HCT116 (cell line): ENCODE measurements at regions of chr10 and their contacts with region 1.

Region 1: GRCh38 chr10:52215745-52216361 is 98.2 kb upstream of the DKK1 start:
- DNase-seq: peak; percentile 60
- ATAC-seq: peak; percentile 69
- H3K4me3 ChIP-seq: no peak overlapping the region
- H3K27ac ChIP-seq: no peak overlapping the region
- H3K4me1 ChIP-seq: no peaks in the 10 kb centered on the region; a peak in 1 of 4 replicates
- H3K27me3 ChIP-seq: no peaks in the 10 kb centered on the region
- CTCF ChIP-seq: peak; percentile 51 to 80 (median 64); a peak in 5 of 6 replicates
- POLR2A ChIP-seq: no peak
- RAD21 ChIP-seq: peak; percentile 81

Region 2: DNA sequence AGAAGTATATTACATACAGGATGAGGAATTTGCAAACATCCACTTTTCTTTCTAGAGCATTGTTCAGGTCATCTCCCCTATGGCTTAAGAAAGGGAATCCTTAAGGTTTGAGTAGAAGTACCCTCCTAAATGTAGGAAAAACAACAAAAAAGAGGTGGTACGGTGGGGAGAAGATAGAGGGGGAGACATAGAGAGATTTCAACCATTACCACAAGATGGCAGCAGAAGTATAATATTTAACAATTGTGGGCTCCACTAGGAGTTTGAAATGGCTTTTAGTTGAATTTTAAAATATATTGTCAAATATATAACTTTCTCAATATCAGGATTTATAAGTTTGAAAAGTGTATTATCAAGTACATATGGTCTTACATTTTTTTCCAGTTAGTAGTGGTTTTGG is 1214.3 kb before region 1 on chr10:
- CTCF ChIA-PET with region 1: no interaction called
- POLR2A ChIA-PET with region 1: no interaction called
- RAD21 ChIA-PET with region 1: no interaction called
- intact Hi-C with region 1: loop called (anchors 1 kb)
- DNase-seq: no peak
- ATAC-seq: peak; percentile 72
- H3K4me3 ChIP-seq: no peak overlapping the region
- H3K27ac ChIP-seq: no peak overlapping the region
- H3K4me1 ChIP-seq: no peaks in the 10 kb centered on the region
- H3K27me3 ChIP-seq: peaks cover 7% of the 10 kb centered on the region
- CTCF ChIP-seq: peak; percentile 37 to 67 (median 48); a peak in 5 of 6 replicates
- POLR2A ChIP-seq: no peak
- RAD21 ChIP-seq: peak; percentile 53

Region 3: GRCh38 chr10:51063659-51064535 is 1152.0 kb before region 1 on chr10:
- CTCF ChIA-PET with region 1: interaction called, 3 read pairs
- POLR2A ChIA-PET with region 1: no interaction called
- RAD21 ChIA-PET with region 1: no interaction called
- intact Hi-C with region 1: loop called (anchors 5 kb)
- DNase-seq: peak; percentile 15
- ATAC-seq: peak; percentile 72
- H3K4me3 ChIP-seq: no peak overlapping the region
- H3K27ac ChIP-seq: no peak overlapping the region
- H3K4me1 ChIP-seq: no peaks in the 10 kb centered on the region
- H3K27me3 ChIP-seq: peaks cover 15% of the 10 kb centered on the region; the same call in 1 of the 2 replicates
- CTCF ChIP-seq: peak; percentile 37 to 69 (median 38); a peak in 5 of 6 replicates
- POLR2A ChIP-seq: no peak
- RAD21 ChIP-seq: peak; percentile 61

Region 4: DNA sequence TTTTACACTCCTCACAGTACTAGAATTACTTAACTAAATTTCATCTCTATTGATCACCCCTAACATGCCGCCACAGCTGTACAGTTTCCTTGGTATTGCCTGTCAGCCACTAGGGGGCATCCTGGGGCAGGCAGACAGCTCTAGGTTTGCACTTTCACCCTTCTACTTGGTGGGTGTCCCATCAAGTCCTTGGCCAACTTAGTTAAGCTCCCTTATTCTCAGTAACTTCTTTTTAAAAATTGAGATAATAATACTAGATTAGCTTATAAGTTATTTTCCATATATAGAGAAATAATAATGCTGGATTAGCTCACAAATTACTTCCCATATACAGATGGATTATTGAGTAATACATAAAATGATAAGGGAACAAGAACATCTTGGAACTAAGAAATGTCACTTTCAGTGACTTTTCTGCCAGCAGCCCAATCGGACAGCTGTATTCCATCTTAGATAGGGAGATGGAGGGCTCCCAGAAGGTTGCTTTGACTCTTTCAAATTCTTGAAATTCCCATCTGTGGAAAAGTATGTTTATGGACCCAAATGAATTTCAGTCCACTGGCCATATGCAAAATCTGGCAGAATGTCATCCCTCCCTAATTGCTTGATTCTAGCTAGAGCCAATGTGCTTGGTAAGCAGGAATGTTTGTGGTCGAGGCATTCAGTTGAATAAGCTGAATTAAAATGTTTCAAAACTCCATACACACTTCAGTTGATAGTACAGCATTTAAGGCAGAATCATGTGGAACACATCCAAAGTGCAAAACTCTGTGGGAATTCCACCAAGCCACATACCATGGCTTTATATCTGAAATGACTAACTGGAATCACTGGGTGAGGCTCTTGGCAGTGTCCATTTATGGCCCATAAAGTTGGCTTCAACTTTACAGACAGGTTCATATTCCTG is 826.2 kb before region 1 on chr10:
- CTCF ChIA-PET with region 1: interaction called, 9 read pairs
- POLR2A ChIA-PET with region 1: no interaction called
- RAD21 ChIA-PET with region 1: no interaction called
- intact Hi-C with region 1: loop called (anchors 2 kb)
- DNase-seq: peak; percentile 16
- ATAC-seq: peak; percentile 86
- H3K4me3 ChIP-seq: no peak overlapping the region
- H3K27ac ChIP-seq: no peak overlapping the region
- H3K4me1 ChIP-seq: no peaks in the 10 kb centered on the region
- H3K27me3 ChIP-seq: no peaks in the 10 kb centered on the region
- CTCF ChIP-seq: peak; percentile 57 to 93 (median 93)
- POLR2A ChIP-seq: no peak
- RAD21 ChIP-seq: peak; percentile 72

Region 5: DNA sequence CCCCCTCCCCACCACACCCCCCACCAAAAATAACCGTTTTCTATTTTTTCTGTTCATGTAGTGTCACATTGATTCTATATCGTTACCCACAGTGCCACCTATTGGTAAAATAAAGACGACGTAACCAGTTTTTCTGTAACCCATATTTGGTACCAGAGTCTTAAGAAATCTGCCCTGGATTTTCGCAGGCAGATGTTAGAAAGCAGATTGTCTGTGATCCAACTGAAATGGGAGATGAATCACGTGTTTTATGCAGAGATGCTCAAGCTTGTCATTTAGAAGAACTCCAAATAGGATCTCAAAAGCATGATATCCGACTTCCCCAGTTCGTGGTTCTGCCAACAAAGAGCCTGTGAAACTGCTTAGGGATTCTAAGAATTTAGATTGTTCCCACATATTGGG is 255.4 kb before region 1 on chr10:
- CTCF ChIA-PET with region 1: no interaction called
- POLR2A ChIA-PET with region 1: no interaction called
- RAD21 ChIA-PET with region 1: no interaction called
- intact Hi-C with region 1: loop called (anchors 5 kb)
- DNase-seq: peak; percentile 10
- ATAC-seq: peak; percentile 67
- H3K4me3 ChIP-seq: no peak overlapping the region
- H3K27ac ChIP-seq: no peak overlapping the region
- H3K4me1 ChIP-seq: no peaks in the 10 kb centered on the region
- H3K27me3 ChIP-seq: peaks cover 19% of the 10 kb centered on the region; the same call in 1 of the 2 replicates
- CTCF ChIP-seq: peak; percentile 36 to 64 (median 38); a peak in 4 of 6 replicates
- POLR2A ChIP-seq: no peak
- RAD21 ChIP-seq: peak; percentile 52

Region 6: DNA sequence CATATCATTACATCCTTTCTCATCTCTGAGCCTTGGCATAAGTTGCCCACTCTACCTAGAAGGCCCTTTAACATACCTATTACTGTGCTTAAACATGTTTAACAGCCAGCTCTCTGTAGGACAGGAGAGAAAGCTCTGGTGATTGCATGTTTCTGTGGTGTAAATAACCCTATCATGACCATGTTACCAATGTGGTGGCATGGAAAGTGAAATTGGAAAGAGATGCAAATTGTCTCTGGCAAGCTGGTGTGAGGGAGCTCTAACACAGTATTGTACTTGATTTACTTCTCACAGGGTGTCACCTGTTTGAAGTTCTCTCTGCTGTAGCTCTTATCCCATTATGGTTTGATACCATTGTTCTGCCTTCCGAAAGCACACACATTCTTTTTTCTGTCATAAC is 133.5 kb before region 1 on chr10:
- CTCF ChIA-PET with region 1: no interaction called
- POLR2A ChIA-PET with region 1: no interaction called
- RAD21 ChIA-PET with region 1: no interaction called
- intact Hi-C with region 1: no loop called
- DNase-seq: no peak
- ATAC-seq: no peak
- H3K4me3 ChIP-seq: no peak overlapping the region
- H3K27ac ChIP-seq: no peak overlapping the region
- H3K4me1 ChIP-seq: no peaks in the 10 kb centered on the region
- H3K27me3 ChIP-seq: no peaks in the 10 kb centered on the region
- CTCF ChIP-seq: no peak
- POLR2A ChIP-seq: no peak
- RAD21 ChIP-seq: no peak